IMR-90 (cell line): ENCODE measurements at regions of chr14 and their contacts with region 1.

Region 1: GRCh38 chr14:35687335-35687939 is 121.7 kb downstream of the RALGAPA1 start:
- DNase-seq: peak; percentile 68
- ATAC-seq: peak; percentile 93
- H3K4me3 ChIP-seq: no peak overlapping the region
- H3K27ac ChIP-seq: no peak overlapping the region
- H3K4me1 ChIP-seq: peaks cover 4% of the 10 kb centered on the region
- H3K27me3 ChIP-seq: no peaks in the 10 kb centered on the region
- CTCF ChIP-seq: peak; percentile 92
- POLR2A ChIP-seq: no peak
- RAD21 ChIP-seq: peak; percentile 94

Region 2: DNA sequence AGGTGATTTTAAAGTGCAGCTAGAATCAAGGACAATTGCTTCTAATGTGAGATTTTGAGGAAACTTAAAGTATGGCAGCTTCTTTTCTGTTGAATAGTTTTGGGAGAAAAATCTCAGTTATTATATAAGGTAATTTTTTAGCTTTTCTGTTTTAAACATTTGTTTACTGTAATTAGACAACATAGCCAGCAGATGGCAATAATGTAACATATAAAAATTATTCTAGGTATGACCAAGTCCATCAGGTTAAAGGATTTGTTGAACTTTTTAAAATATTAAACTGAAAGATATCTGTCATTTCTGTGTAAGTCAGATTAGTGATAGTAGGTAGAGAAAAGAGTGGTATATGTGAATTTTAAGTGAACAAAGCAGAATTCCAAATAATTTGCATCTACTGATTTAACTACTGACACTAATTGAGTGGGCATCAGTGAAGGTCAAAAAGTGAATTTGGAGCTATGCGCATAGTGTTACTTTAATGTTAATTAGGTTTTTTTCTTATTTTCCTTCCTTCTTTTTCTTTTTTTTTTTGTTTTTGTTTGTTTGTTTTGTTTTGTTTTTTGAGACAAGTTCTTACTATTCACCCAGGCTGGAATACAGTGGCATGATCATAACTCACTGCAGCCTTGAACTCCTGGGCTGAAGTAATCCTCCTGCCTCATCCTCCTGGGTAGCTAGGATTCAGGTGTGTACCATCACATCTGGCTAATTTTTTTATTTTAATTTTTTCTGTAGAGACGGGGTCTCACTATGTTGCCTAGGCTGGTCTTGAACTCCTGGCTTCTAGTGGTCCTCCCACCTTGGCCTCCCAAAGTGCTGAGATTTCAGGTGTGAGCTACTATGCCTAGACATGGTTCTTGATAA is 546.5 kb before region 1 on chr14:
- CTCF ChIA-PET with region 1: no interaction called
- POLR2A ChIA-PET with region 1: no interaction called
- dilution Hi-C with region 1: no loop called
- in situ Hi-C with region 1: loop called (anchors 10 kb)
- intact Hi-C with region 1: loop called (anchors 5 kb)
- DNase-seq: peak; percentile 52
- ATAC-seq: peak; percentile 62; the same call in 1 of the 2 replicates
- H3K4me3 ChIP-seq: no peak overlapping the region
- H3K27ac ChIP-seq: no peak overlapping the region
- H3K4me1 ChIP-seq: no peaks in the 10 kb centered on the region
- H3K27me3 ChIP-seq: no peaks in the 10 kb centered on the region
- CTCF ChIP-seq: peak; percentile 62
- POLR2A ChIP-seq: no peak
- RAD21 ChIP-seq: peak; percentile 64

Region 3: GRCh38 chr14:35423621-35424020 is 263.8 kb before region 1 on chr14:
- CTCF ChIA-PET with region 1: interaction called, 3 read pairs
- POLR2A ChIA-PET with region 1: no interaction called
- dilution Hi-C with region 1: loop called (anchors 25 kb)
- in situ Hi-C with region 1: loop called (anchors 10 kb)
- intact Hi-C with region 1: loop called (anchors 2 kb)
- DNase-seq: no peak
- ATAC-seq: no peak
- H3K4me3 ChIP-seq: no peak overlapping the region
- H3K27ac ChIP-seq: no peak overlapping the region
- H3K4me1 ChIP-seq: peaks cover 6% of the 10 kb centered on the region
- H3K27me3 ChIP-seq: no peaks in the 10 kb centered on the region
- CTCF ChIP-seq: no peak
- POLR2A ChIP-seq: no peak
- RAD21 ChIP-seq: no peak

Region 4: DNA sequence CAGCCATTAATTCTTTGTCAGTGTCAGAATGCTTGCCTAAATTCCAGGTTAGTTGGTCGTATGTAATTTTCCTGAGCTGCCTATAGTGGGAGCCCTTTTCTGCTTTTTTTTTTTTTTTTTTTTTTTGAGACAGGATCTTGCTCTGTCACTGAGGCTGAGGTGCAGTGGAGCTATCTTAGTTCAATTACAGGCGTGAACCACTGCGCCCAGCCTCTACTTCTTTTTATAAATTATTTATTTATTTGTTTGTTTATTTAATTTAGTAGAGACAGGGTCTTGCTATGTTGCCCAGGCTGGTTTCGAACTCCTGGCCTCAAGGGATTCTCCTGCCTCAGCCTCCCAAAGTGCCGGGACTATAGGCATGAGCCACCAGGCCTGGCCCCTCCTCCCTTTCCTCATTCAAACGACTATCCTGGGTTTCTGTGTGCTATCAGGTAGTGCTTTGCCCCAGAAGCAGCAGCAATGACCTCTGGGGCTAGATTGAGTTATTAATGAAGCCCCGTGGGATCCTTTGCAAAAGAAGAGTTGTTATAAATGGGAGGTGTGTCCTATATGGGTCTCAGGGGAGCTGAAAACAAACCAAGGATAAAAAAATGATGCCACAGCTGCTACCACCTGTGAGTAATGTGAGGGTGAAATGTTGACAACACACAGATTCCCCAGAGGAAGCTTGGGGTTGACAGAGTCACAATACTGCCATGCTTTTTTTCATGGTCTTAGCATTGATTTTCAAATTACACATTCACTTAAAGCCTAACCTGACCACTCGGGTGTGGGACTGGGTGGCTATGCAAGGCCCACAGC is 248.3 kb before region 1 on chr14:
- CTCF ChIA-PET with region 1: no interaction called
- POLR2A ChIA-PET with region 1: no interaction called
- dilution Hi-C with region 1: loop called (anchors 25 kb)
- in situ Hi-C with region 1: no loop called
- intact Hi-C with region 1: loop called (anchors 1 kb)
- DNase-seq: no peak
- ATAC-seq: peak; percentile 40; the same call in 1 of the 2 replicates
- H3K4me3 ChIP-seq: no peak overlapping the region
- H3K27ac ChIP-seq: no peak overlapping the region
- H3K4me1 ChIP-seq: no peaks in the 10 kb centered on the region
- H3K27me3 ChIP-seq: no peaks in the 10 kb centered on the region; the same call in 1 of the 2 replicates
- CTCF ChIP-seq: peak; percentile 50
- POLR2A ChIP-seq: no peak
- RAD21 ChIP-seq: peak; percentile 37; the same call in 1 of the 2 replicates

Region 5: GRCh38 chr14:35533357-35534207 is 153.9 kb before region 1 on chr14 and contains the start of gene INSM2:
- CTCF ChIA-PET with region 1: no interaction called
- POLR2A ChIA-PET with region 1: no interaction called
- dilution Hi-C with region 1: no loop called
- in situ Hi-C with region 1: no loop called
- intact Hi-C with region 1: loop called (anchors 5 kb)
- DNase-seq: peak; percentile 34
- ATAC-seq: peak; percentile 93
- H3K4me3 ChIP-seq: peak within 1 kb of the TSS; percentile 49
- H3K27ac ChIP-seq: no peak within 1 kb of the TSS
- H3K4me1 ChIP-seq: peaks cover 2% of the 10 kb centered on the region; the same call in 1 of the 2 replicates
- H3K27me3 ChIP-seq: peaks cover 38% of the 10 kb centered on the region
- CTCF ChIP-seq: no peak
- POLR2A ChIP-seq: no peak
- RAD21 ChIP-seq: no peak
- total RNA-seq, gene INSM2: not detected in 2 replicates

Region 6: GRCh38 chr14:35808076-35808652 is 120.7 kb after region 1 on chr14:
- CTCF ChIA-PET with region 1: no interaction called
- POLR2A ChIA-PET with region 1: no interaction called
- dilution Hi-C with region 1: no loop called
- in situ Hi-C with region 1: no loop called
- intact Hi-C with region 1: loop called (anchors 5 kb)
- DNase-seq: no peak
- ATAC-seq: no peak
- H3K4me3 ChIP-seq: peak overlapping the region; percentile 99
- H3K27ac ChIP-seq: peak overlapping the region; percentile 91
- H3K4me1 ChIP-seq: peaks cover 2% of the 10 kb centered on the region; the same call in 1 of the 2 replicates
- H3K27me3 ChIP-seq: no peaks in the 10 kb centered on the region
- CTCF ChIP-seq: no peak
- POLR2A ChIP-seq: no peak
- RAD21 ChIP-seq: no peak

Region 7: DNA sequence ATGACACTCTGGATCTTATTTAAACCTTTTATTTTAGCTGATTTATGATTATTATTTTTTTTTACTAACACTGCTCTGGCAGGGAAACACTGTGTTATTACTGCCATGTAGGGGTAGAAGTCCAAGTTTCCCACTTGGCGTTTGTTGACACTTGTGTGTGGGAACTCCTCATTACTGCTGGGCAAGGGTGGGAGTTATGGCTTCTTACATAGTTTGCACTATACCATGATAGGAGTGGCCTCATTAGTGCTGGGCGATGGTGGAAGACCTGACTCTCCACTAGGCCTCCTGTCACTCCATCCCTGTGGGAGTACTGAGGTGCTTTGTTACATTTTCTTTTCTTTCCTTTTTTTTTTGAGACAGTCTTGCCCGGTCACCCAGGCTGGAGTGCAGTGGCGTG is 222.2 kb after region 1 on chr14:
- CTCF ChIA-PET with region 1: no interaction called
- POLR2A ChIA-PET with region 1: no interaction called
- dilution Hi-C with region 1: no loop called
- in situ Hi-C with region 1: no loop called
- intact Hi-C with region 1: no loop called
- DNase-seq: no peak
- ATAC-seq: no peak
- H3K4me3 ChIP-seq: no peak overlapping the region
- H3K27ac ChIP-seq: no peak overlapping the region
- H3K4me1 ChIP-seq: no peaks in the 10 kb centered on the region
- H3K27me3 ChIP-seq: no peaks in the 10 kb centered on the region
- CTCF ChIP-seq: no peak
- POLR2A ChIP-seq: no peak
- RAD21 ChIP-seq: no peak